ENCODE measurements at regions of chr4 and their contacts with region 1.

Region 1: DNA sequence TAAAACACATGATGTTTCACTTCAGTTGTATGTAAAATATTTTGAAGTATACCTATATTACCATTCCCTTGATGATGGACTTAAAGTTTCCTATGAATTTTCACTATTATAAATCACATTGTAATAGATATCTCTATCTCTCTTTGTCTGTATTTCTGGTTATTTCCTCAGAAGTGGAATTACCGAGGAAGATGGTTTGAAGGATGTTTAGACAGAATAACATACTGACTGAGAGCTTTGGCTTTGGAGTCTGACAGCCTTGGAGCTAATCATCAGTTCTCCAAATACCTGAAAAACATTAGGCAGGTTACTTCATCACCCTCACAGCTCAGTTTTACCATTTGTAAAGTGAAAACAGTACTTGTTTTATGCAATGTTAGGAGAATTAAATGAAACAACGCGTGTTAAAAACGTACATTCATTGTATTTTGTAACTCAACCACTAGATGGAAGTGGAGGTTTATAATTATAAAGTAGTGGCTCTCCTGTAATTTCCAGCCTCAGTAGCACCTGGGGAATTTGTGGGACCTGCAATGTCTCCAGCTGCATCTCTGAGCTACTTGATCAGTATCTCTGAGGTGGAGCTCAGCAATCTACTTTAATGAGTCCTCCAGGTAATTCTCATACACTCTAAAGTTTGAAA is 14.3 kb downstream of the JCHAIN start:
- DNase-seq: no peak
- H3K4me3 Mint-ChIP-seq: no peak overlapping the region
- H3K27ac Mint-ChIP-seq: no peak overlapping the region
- H3K4me1 Mint-ChIP-seq: peaks cover 4% of the 10 kb centered on the region
- H3K27me3 Mint-ChIP-seq: peaks cover 14% of the 10 kb centered on the region

Region 2: DNA sequence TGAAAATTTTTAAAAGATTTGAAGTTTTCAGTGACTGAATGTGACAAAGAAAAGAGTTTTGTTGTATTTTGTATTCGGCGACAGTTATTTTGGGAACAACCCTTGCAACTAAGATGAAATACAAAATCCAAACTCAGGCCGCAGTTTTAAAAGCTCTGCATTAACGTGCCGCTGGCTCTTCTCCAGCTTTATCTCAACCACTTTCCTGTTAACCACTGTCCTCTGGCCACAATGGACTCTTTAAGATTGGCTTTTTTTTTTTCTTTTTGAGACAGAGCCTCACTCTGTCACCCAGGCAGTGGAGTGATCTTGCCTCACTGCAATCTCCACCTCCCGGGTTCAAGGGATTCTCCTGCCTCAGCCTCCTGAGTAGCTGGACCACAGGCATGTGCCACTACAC is 155.8 kb before region 1 on chr4:
- intact Hi-C with region 1: no loop called
- DNase-seq: no peak
- H3K4me3 Mint-ChIP-seq: no peak overlapping the region
- H3K27ac Mint-ChIP-seq: no peak overlapping the region
- H3K4me1 Mint-ChIP-seq: no peaks in the 10 kb centered on the region
- H3K27me3 Mint-ChIP-seq: no peaks in the 10 kb centered on the region

Region 3: GRCh38 chr4:71009890-71010588 is 358.1 kb after region 1 on chr4:
- intact Hi-C with region 1: loop called (anchors 1 kb)
- DNase-seq: no peak
- H3K4me3 Mint-ChIP-seq: no peak overlapping the region
- H3K27ac Mint-ChIP-seq: peak overlapping the region; percentile 64
- H3K4me1 Mint-ChIP-seq: peaks cover 48% of the 10 kb centered on the region
- H3K27me3 Mint-ChIP-seq: no peaks in the 10 kb centered on the region

Region 4: DNA sequence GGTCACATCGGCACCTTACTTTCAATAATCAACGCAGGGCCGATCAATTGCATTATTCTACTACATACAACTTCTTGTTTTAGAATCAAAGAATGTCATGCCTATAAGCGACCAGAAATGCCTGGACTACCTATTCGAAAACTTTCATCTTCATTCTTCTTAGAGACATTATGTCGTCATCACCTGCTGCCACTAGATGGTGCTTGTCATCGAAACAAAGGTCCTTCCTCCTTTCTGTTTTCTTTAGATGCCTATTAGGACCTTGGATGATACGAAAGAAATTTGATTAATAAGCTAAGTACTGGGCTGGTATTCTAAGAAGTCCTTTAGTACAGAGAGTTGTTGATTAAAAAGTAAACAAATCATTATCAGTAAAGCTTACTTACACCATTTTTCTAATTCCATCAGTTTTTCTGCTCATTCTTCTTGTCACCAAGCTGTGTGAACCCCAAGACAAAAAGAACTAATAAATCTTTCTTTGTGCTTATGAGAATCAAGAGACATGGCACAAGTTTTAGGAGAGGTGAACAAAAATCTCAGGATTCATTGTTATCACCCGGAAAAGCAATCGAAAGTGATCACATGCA is 532.3 kb after region 1 on chr4:
- intact Hi-C with region 1: loop called (anchors 10 kb)
- DNase-seq: no peak
- H3K4me3 Mint-ChIP-seq: no peak overlapping the region
- H3K27ac Mint-ChIP-seq: no peak overlapping the region
- H3K4me1 Mint-ChIP-seq: peaks cover 36% of the 10 kb centered on the region
- H3K27me3 Mint-ChIP-seq: peaks cover 41% of the 10 kb centered on the region